ENCODE measurements at regions of chr17 and their contacts with region 1.

Region 1: DNA sequence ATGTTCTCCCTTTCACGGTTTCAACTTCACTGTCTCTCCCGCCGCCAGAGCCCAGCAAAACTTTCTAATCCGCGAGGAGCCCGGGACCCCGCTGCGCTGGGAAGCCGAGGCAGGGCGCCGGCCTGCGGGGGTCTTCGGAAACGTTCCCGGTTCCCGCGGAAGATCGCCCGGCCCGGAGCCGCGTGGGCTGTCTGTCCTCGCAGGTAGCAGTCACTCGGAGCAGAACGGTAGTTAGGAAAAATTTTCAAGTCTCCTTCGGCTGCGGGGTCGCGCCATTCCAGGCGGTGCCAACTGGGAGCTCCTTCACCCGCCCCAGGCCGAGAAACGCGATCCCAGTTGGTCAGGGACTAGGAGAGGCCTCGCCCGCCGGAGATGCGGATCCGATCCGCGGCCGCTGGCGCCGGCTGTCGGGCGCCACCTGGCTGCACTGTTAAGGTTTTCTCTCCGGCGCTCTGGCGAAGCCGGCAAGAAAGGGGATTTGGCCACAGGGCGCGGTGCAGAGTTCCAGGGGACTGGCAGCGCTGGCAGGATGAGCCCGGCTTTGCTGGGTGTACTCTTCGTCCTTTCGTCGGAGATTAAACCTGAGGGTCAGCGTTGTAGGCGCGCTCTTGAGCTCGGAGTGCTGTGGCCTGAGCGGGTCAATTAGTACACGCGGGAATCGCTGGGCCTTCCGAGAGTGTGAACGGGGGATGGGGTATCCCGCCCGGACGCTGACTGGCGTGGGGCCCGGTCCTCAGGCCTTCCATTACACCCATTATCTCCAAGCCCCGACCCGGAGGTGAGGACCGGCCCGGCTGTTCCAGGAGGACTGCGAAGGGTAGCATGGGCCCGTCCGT is 135.4 kb downstream of the KCNJ12 start:
- DNase-seq: no peak
- ATAC-seq: peak; percentile 95
- H3K4me3 ChIP-seq: no peak overlapping the region
- H3K27ac ChIP-seq: no peak overlapping the region
- H3K4me1 ChIP-seq: no peaks in the 10 kb centered on the region
- H3K27me3 ChIP-seq: peaks cover 3 to 11% of the 10 kb centered on the region in 2 experiments
- CTCF ChIP-seq: peak; percentile 54 to 72 (median 59)
- EP300 ChIP-seq: no peak
- POLR2A ChIP-seq: no peak
- RAD21 ChIP-seq: peak; percentile 56

Region 2: DNA sequence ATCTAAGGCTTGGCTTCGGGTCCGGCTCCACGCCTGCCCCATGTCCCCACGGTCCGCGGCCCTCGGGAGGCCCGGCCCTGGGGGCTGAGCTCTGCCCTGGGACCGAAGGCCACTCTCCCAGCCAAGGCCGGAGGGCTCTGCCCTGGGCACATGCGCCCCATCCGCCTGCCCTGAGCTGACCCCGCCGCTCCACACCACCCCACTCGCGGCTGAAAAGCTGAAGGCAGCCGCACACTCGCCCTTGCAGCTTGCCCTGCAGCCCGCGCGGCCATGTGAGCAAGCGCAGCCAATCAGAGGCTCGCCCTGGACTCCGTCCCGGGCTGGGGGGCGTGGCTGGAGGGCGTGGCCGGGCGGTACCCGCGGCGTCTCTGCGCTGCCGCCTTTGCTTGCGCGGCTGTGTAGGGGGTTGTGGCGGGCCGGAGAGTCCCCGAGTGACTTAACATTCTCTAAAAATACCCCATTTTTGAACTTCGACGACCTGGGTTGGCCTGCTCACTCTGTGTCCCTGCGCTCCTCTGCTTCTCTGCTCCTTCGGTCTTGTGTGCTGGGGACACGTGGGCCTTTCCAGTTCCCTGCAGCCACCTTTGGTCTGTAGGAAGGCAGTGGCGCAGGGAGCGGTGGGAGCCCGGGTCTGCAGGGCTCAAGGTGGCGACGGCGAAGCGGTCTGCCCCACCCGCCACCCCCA is 235.9 kb before region 1 on chr17:
- CTCF ChIA-PET with region 1: interaction called, 37 read pairs
- POLR2A ChIA-PET with region 1: no interaction called
- RAD21 ChIA-PET with region 1: interaction called, 13 read pairs
- SMC1A ChIA-PET with region 1: interaction called, 6 read pairs
- in situ Hi-C with region 1: loop called (anchors 10 kb)
- intact Hi-C with region 1: loop called (anchors 1 kb)
- DNase-seq: peak; percentile 43
- ATAC-seq: peak; percentile 97
- H3K4me3 ChIP-seq: peak overlapping the region; percentile 72
- H3K27ac ChIP-seq: no peak overlapping the region
- H3K4me1 ChIP-seq: peaks cover 10% of the 10 kb centered on the region
- H3K27me3 ChIP-seq: peaks cover 0 to 5% of the 10 kb centered on the region in 2 experiments; a peak in 3 of 4 replicates
- CTCF ChIP-seq: no peak
- EP300 ChIP-seq: no peak
- POLR2A ChIP-seq: peak; percentile 81
- RAD21 ChIP-seq: no peak

Region 3: DNA sequence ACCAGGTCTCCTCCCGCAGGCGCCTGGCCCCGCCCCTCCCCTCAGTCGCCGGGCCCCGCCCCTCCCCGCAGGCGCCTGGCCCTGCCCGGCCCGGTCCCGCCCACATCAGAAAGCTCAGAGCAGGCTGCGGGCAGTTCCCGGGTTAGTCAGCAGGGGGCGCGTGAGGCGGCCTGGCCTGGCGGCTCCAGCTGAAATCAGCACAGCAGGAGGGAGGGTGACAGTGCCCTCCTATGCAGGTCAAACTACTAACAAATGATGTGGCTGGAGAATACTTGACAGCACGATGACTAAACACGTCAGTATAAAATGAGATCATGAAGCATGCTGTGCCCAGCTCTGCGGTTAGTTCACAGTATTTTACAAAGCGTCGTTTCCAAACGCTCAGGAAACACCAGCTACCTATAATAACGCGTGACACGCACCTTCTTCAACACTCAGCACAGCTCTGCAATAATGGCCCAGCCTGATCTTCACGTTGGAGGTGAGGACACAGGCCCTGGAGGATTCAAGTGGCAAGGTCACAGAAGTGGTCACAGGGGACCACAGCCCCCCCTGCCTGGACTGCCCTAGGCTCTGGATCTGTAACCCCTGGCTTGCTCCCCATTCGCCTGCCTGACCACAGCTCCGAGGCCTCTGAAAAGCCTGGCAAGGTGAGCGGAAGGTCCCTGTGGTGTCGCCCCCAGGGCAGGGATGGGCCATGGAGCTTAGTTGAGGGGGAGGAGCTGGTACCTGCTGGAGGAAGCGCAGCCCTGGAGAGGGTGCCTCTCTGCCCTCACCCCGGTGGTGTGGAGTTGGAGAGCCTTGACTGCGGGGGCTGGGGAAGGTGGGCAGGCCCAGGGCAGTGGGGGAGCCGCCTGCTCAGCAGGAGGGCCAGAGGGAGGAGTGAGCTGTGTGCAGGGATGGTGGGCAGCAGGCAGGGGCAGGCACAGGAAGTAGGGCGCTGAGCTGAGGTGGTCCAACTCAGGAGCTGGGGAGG is 54.2 kb before region 1 on chr17:
- CTCF ChIA-PET with region 1: interaction called, 43 read pairs
- POLR2A ChIA-PET with region 1: interaction called, 4 read pairs
- RAD21 ChIA-PET with region 1: interaction called, 10 read pairs
- SMC1A ChIA-PET with region 1: interaction called, 8 read pairs
- in situ Hi-C with region 1: no loop called
- intact Hi-C with region 1: loop called (anchors 2 kb)
- DNase-seq: peak; percentile 8
- ATAC-seq: peak; percentile 98
- H3K4me3 ChIP-seq: no peak overlapping the region
- H3K27ac ChIP-seq: no peak overlapping the region
- H3K4me1 ChIP-seq: no peaks in the 10 kb centered on the region
- H3K27me3 ChIP-seq: peaks cover 0 to 2% of the 10 kb centered on the region in 2 experiments; a peak in 2 of 4 replicates
- CTCF ChIP-seq: peak; percentile 67 to 84 (median 70)
- EP300 ChIP-seq: no peak
- POLR2A ChIP-seq: no peak
- RAD21 ChIP-seq: peak; percentile 52

Measured in GM12878 (cell line).